ENCODE measurements at regions of chr1 and their contacts with region 1.

Region 1: GRCh38 chr1:109548321-109549267 is at the start of gene GNAI3:
- DNase-seq: peak; percentile 91 to 98
- ATAC-seq: peak; percentile 88 to 98 (median 93)
- H3K4me3 ChIP-seq: peak within 1 kb of the TSS; percentile 89
- H3K4me3 Mint-ChIP-seq: peak within 1 kb of the TSS; percentile 94
- H3K27ac ChIP-seq: peak within 1 kb of the TSS; percentile 94
- H3K27ac Mint-ChIP-seq: peak within 1 kb of the TSS; percentile 91 to 98
- H3K4me1 ChIP-seq: peaks cover 5% of the 10 kb centered on the region
- H3K4me1 Mint-ChIP-seq: peaks cover 41 to 56% of the 10 kb centered on the region in 2 donors
- H3K27me3 ChIP-seq: no peaks in the 10 kb centered on the region
- H3K27me3 Mint-ChIP-seq: no peaks in the 10 kb centered on the region
- CTCF ChIP-seq: no peak
- total RNA-seq, gene GNAI3: 6.1 to 7.6 (median 6.9) TPM

Region 2: DNA sequence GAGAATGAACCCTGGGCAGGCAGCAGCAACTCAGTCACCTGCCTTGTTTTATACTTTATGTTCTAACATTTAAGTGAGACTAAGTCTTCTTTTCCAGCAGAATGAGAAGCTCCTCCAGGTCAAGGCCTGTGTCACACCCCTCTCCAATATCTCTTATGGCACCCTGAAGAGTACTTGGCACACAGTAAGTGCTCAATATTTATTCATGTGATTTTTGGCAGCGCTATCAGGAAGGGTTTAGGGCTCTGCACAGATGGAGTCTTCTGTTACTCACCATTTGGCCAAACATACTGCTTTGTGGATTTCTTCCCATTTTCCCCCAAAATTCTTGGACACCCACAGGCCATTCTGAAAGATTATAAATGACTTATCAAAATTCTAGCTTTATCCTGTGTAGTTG is 197.9 kb before region 1 on chr1:
- intact Hi-C with region 1: no loop called
- DNase-seq: no peak
- ATAC-seq: no peak
- H3K4me3 ChIP-seq: no peak overlapping the region
- H3K4me3 Mint-ChIP-seq: no peak overlapping the region
- H3K27ac ChIP-seq: no peak overlapping the region
- H3K27ac Mint-ChIP-seq: no peak overlapping the region
- H3K4me1 ChIP-seq: no peaks in the 10 kb centered on the region
- H3K4me1 Mint-ChIP-seq: no peaks in the 10 kb centered on the region
- H3K27me3 ChIP-seq: no peaks in the 10 kb centered on the region
- H3K27me3 Mint-ChIP-seq: peaks cover 0 to 4% of the 10 kb centered on the region in 2 donors
- CTCF ChIP-seq: no peak

Region 3: DNA sequence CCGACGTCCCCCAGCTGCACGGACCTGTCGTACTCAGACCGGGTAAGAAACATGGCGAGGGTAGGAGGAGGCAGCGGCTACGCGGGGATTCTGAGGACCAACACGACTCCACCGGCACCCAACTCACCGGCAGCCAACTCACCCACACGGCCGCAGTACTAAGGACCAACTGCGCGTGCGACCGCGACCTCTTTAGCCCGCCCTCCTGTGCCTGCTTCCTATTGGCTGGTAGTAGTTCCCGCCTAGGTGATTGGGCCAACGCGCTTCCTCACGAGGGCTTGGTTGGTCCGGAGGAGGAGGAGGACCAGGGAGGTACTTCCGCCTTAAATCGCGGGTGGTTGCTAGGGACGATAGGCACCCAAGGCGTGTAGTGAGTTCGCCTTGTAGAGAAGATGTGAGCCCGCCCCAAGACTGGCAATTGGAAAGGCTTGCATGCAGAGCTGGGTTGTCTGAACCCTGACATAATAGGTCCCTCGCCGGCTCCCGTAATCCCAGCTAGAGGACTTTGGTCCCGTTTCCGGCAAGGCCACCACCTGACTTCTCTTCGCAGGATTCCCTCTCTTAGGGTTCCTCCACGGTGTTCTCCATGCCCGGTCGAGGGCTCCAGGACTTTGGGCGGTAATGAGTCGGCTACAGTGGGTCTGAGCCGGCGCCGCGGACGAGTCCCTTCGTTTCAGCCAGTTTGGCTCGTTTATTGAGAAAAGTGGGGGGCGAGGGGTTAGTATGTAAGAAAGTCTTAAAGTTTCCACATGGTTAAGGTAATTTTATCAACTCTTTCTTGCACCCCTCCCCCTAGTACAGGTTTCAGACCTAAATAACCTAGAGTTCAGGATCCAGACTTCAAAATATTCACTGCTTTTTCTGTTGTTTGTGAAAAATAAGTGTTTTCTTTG is 122.1 kb before region 1 on chr1 and contains the start of gene PSMA5:
- intact Hi-C with region 1: loop called (anchors 5 kb)
- DNase-seq: peak; percentile 92 to 98
- ATAC-seq: peak; percentile 87 to 98 (median 94)
- H3K4me3 ChIP-seq: peak within 1 kb of the TSS; percentile 94
- H3K4me3 Mint-ChIP-seq: peak within 1 kb of the TSS; percentile 96
- H3K27ac ChIP-seq: peak within 1 kb of the TSS; percentile 96
- H3K27ac Mint-ChIP-seq: peak within 1 kb of the TSS; percentile 98
- H3K4me1 ChIP-seq: peaks cover 17% of the 10 kb centered on the region
- H3K4me1 Mint-ChIP-seq: peaks cover 36 to 45% of the 10 kb centered on the region in 2 donors
- H3K27me3 ChIP-seq: no peaks in the 10 kb centered on the region
- H3K27me3 Mint-ChIP-seq: peaks cover 0 to 9% of the 10 kb centered on the region in 2 donors
- CTCF ChIP-seq: no peak
- total RNA-seq, gene PSMA5: 54.7 to 76.0 (median 59.6) TPM

Region 4: DNA sequence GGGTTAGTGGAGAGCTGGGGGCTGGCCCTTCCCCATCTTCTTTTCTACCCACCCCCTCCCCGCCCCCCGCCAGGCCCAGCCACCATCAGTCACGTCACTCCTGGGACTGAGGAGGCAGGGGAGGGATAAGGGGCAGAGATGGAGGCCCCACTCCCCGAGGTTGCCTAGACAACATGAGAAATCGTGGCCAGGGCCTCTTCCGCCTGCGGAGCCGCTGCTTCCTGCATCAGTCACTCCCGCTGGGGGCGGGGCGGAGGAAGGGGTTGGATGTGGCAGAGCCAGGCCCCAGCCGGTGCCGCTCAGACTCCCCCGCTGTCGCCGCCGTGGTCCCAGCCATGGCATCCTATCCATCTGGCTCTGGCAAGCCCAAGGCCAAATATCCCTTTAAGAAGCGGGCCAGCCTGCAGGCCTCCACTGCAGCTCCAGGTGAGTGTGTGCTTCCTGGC is 72.3 kb after region 1 on chr1:
- intact Hi-C with region 1: loop called (anchors 1 kb)
- DNase-seq: peak; percentile 92 to 97
- ATAC-seq: peak; percentile 80 to 90 (median 83)
- H3K4me3 ChIP-seq: peak overlapping the region; percentile 76
- H3K4me3 Mint-ChIP-seq: peak overlapping the region; percentile 99
- H3K27ac ChIP-seq: peak overlapping the region; percentile 89
- H3K27ac Mint-ChIP-seq: peak overlapping the region; percentile 93 to 99
- H3K4me1 ChIP-seq: peaks cover 64% of the 10 kb centered on the region
- H3K4me1 Mint-ChIP-seq: peaks cover 43 to 67% of the 10 kb centered on the region in 2 donors
- H3K27me3 ChIP-seq: no peaks in the 10 kb centered on the region
- H3K27me3 Mint-ChIP-seq: peaks cover 0 to 2% of the 10 kb centered on the region in 2 donors
- CTCF ChIP-seq: no peak